ENCODE measurements at regions of chr11 and their contacts with region 1.

Region 1: DNA sequence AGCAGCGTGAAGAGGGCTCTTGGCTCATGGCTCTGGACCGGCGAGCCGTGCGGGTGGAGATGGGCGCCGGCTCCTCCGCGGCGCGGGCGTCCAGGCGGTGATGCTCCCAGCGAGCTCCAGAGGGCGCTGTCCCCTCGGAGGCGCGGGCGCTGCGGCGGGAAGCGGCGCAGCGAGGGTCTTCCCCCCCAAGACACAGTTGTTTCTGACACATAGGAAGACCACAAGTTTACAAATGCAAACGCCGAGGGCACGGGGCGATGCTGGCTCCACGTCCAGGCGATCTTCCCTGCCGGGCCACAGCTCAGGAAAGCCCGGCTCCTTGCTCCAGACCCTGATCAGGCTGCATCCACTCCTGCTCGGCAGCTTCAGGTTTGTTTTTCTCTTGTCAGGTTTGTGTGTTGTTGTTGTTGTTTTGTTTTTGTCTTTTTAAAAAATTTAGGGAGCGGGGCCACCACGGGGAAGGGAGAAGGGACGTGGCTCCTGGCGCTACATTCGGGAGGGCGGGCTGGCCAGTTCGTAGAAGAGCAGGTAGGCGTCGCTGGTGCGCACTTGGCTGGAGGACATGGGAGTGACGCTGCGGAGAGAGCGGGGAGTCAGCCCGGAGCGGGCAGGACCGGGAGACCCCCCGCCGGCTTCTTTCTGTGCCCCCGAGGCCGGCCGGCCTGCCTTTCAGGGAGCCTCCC is 10.0 kb upstream of the MFRP start:
- DNase-seq: peak; percentile 86
- H3K4me3 ChIP-seq: peak overlapping the region; percentile 37 to 59 (median 41)
- H3K27ac ChIP-seq: peak overlapping the region; percentile 48 to 77 (median 72)
- H3K4me1 ChIP-seq: peaks cover 4 to 27% (median 13%) of the 10 kb centered on the region in 4 donors
- H3K27me3 ChIP-seq: peaks cover 7% of the 10 kb centered on the region
- CTCF ChIP-seq: peak; percentile 81 to 97 (median 94)
- EP300 ChIP-seq: no peak
- POLR2A ChIP-seq: no peak

Region 2: GRCh38 chr11:119205574-119206510 is 150.6 kb before region 1 on chr11 and contains the start of gene CBL:
- in situ Hi-C with region 1: no loop called
- intact Hi-C with region 1: no loop called
- DNase-seq: peak; percentile 99
- H3K4me3 ChIP-seq: peak within 1 kb of the TSS; percentile 61 to 86 (median 82)
- H3K27ac ChIP-seq: peak within 1 kb of the TSS; percentile 92 to 96 (median 94)
- H3K4me1 ChIP-seq: peaks cover 2 to 26% (median 11%) of the 10 kb centered on the region in 4 donors
- H3K27me3 ChIP-seq: no peaks in the 10 kb centered on the region
- CTCF ChIP-seq: peak; percentile 91 to 97 (median 94)
- EP300 ChIP-seq: no peak
- POLR2A ChIP-seq: peak; percentile 63
- total RNA-seq, gene CBL: 6.8 to 18.7 (median 12.4) TPM

Region 3: DNA sequence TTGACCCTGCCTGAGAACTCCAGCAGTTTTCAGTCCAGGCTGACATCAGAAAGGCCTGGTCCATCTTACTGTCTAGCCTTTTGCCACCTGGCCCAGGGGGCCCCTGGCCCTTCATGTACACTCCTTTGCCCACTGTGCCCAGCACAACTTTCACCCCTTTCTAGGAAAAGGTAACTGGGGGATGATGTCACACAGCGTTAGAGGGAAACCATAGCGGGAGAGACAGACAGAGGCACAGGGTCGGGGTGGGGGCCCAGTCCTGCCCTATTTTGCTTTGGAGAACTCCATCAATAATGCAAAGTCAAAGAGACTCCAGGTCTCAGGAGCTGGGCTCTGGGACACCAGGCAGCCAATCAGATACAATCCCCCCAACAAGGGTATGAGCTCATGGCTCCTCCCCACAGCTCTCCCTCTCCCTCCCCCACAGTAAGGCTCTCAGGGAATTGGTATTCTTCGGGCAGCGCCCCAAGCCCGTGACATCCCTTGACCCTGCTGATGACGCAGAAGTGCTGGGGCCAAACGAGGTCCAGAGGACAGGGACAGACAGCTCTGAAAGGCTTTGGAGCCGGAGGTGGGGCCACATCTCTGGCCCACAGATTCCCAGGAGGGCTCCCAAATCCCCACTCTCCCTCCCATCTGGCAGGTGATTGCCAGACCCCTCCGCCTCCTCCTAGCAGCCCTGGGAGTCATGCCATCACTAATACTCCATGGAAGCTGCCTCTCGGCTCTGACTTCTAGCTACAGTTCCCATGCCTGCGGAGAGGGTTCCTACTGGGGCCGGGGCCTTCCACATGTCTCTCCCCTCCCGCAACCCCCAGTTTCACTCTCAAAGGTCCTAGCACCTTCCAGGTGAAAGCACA is 19.1 kb after region 1 on chr11:
- in situ Hi-C with region 1: no loop called
- intact Hi-C with region 1: loop called (anchors 1 kb)
- DNase-seq: peak; percentile 55
- H3K4me3 ChIP-seq: no peak overlapping the region
- H3K27ac ChIP-seq: peak overlapping the region; percentile 53 to 71 (median 66)
- H3K4me1 ChIP-seq: peaks cover 0 to 30% (median 14%) of the 10 kb centered on the region in 4 donors
- H3K27me3 ChIP-seq: no peaks in the 10 kb centered on the region
- CTCF ChIP-seq: no peak
- EP300 ChIP-seq: no peak
- POLR2A ChIP-seq: no peak

Region 4: DNA sequence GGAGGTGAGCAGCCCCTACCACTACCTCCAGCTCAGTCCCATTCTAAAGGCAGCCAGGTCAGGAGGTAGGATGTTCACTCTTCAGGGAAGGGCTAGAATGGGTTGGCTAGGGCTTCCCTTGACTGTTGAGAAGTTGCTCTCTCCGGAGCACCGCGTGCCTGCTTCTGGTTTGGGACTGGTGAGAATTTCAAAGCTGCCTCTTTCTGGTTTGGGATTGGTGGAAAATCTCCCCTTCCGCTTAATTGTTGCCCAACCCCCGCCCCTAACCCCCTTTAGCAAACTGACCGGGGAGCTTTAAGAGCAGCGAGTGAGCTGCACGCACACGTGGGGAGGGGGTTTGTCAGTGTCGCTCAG is 24.3 kb after region 1 on chr11:
- in situ Hi-C with region 1: no loop called
- intact Hi-C with region 1: loop called (anchors 1 kb)
- DNase-seq: no peak
- H3K4me3 ChIP-seq: peak overlapping the region in 3 of 4 donors; percentile 21 to 50 (median 32)
- H3K27ac ChIP-seq: peak overlapping the region in 1 of 4 donors; percentile 45
- H3K4me1 ChIP-seq: peaks cover 5 to 15% (median 15%) of the 10 kb centered on the region in 4 donors
- H3K27me3 ChIP-seq: no peaks in the 10 kb centered on the region
- CTCF ChIP-seq: no peak
- EP300 ChIP-seq: no peak
- POLR2A ChIP-seq: no peak

Region 5: DNA sequence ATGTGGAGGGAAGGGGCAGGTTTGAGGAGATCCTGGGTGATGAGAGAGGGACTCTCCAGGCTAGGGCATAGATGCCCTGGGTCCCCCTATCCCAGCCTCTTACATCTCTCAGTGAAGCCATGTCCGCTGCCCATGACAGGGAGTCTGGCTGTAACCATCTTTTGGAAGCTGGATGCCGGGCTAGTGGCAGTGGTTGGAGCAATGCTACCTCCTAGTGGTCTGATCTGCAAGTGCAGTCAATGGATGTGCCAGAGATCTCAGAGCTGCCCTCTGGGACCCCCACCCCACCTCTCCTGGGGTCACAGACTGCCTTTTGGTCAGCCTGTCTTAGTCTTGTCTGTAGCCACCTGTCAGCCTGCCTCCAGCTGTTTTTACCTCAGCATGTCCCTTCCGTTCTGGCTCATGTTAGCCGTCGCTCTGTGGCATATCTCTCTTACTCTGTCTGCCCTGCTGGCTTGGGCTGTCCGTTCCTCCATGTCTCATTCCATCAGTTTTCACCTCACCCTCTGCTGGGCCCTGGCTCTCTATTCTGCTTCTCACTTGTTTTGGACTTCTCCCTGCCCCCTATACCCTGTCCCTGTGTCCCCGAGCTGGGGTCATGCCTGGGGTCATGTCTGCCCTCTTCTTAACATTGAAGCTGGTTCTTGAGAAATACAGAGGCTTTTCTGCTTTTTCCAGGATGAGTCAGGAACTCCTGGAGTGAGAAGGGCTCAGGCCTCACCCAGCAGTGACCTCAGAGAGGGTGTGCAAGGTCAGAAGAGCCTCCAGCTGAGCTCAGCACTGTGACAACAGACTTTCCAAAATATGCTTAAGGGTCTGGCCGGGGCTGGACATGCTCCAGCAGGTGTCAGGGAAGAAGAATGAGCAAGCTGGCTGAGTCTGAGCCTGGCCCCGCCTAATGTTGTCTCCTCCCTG is 118.4 kb after region 1 on chr11:
- in situ Hi-C with region 1: loop called in 3 of 4 experiments (anchors 5 to 10 kb)
- intact Hi-C with region 1: loop called (anchors 5 kb)
- DNase-seq: peak; percentile 40
- H3K4me3 ChIP-seq: no peak overlapping the region
- H3K27ac ChIP-seq: no peak overlapping the region
- H3K4me1 ChIP-seq: peaks cover 0 to 3% (median 0%) of the 10 kb centered on the region in 4 donors
- H3K27me3 ChIP-seq: no peaks in the 10 kb centered on the region
- CTCF ChIP-seq: peak; percentile 68 to 89 (median 78)
- EP300 ChIP-seq: no peak
- POLR2A ChIP-seq: no peak